Breast epithelium (tissue), 4 donors: ENCODE measurements at regions of chr1 and their contacts with region 1.

Region 1: DNA sequence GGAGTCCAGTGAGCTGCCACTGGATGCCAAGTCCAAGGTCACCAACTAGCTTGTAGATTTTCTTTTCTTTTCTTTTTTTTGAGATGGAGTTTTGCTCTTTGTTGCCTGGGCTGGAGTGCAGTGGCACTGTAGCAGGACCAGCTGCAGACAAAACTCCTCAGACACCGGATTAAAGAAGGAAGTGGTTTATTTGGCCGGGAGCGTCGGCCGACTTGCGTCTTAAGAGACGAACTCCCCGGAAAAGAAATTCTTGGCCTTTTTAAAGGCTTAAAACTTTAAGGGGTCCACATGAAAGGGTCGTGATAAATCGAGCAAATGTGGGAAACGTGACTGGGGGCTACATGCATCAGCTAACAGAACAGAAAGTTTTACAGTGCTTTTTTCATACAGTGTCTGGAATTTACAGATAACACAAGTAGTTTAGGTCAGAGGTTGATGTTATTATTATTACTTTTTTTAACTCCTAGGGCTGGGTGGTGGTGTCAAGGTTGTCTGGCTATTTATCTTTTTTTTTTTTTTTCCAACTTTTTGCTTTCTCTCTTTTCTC is 36.4 kb upstream of the CFAP126 start:
- DNase-seq: no peak
- H3K4me3 ChIP-seq: no peak overlapping the region
- H3K27ac ChIP-seq: no peak overlapping the region
- H3K4me1 ChIP-seq: no peaks in the 10 kb centered on the region
- H3K27me3 ChIP-seq: no peaks in the 10 kb centered on the region
- CTCF ChIP-seq: no peak
- POLR2A ChIP-seq: no peak

Region 2: DNA sequence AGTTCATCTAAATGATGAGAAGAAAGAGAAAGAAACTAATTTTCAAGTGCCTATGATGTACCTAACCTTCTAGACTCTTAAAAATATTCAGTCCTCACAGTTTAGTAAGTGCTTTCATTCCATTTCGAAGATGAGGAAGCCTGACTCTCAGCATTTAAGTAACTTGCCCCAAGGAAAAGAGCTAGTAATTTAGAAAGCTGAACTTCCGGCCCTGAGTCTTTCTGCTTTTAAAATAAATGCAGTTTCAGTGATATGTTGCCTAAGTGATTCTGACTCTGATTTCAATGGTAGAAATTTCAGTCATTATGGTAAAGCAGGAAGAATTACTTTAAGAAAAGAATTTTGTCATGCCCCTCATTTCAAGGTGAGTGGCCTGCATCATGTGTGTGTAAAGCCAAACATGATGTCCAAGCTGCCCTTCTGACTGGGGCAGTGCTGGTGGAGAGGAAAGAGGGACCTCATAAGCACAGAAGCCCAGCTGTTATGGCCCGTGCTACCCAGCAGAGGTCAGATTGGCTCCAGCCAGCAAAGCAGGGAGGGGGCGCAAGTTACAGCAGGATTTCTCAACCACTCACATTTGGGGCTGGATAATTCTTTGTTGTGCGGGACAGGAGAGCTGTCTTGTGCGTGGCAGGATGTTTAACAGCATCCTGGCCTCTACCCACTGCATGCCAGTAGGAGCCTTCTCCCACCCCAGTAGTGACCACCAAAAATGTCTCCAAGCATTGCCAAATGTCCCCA is 1242.0 kb before region 1 on chr1:
- intact Hi-C with region 1: no loop called
- DNase-seq: no peak
- H3K4me3 ChIP-seq: no peak overlapping the region
- H3K27ac ChIP-seq: no peak overlapping the region
- H3K4me1 ChIP-seq: no peaks in the 10 kb centered on the region
- H3K27me3 ChIP-seq: no peaks in the 10 kb centered on the region
- CTCF ChIP-seq: no peak
- POLR2A ChIP-seq: no peak

Region 3: DNA sequence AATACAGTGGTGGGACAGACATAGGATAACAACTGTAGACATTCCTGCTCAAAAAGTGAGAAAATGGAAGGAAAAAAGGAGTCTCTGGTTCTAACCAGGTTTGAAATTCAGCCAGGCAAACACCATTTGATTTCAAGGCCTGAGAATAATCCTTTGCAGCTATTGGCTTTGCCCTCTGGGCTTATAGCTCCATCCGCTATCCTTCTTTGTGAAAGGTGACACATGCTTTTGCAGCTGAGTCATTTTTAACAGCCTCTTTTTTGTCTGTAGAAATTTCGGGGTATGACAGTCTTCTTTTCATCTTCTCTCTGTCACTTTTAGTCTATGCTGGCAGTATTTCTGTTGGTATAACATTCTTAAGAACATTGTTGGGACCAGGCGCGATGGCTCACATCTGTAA is 73.8 kb before region 1 on chr1:
- intact Hi-C with region 1: no loop called
- DNase-seq: no peak
- H3K4me3 ChIP-seq: no peak overlapping the region
- H3K27ac ChIP-seq: no peak overlapping the region
- H3K4me1 ChIP-seq: no peaks in the 10 kb centered on the region
- H3K27me3 ChIP-seq: no peaks in the 10 kb centered on the region
- CTCF ChIP-seq: no peak
- POLR2A ChIP-seq: no peak

Region 4: DNA sequence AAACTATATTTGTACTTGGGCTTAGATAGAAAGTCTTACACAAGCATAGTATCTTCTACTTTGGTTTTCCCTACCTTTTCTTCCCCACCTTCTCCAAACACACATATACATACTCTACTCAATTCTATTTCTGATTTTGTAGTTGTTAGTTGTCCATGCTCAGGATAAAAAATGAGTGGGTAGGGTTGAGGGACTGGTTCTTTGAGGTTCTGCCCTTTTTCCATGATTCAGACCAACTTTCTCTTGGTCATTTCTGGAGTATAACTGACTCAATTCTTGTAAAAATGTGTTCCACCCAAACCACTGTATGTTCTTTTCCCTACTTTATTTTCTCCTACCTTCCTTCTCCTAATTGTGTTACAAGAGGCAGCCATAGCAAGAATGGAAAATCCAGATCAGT is 39.8 kb before region 1 on chr1:
- intact Hi-C with region 1: loop called (anchors 2 kb)
- DNase-seq: no peak
- H3K4me3 ChIP-seq: no peak overlapping the region
- H3K27ac ChIP-seq: no peak overlapping the region
- H3K4me1 ChIP-seq: no peaks in the 10 kb centered on the region
- H3K27me3 ChIP-seq: no peaks in the 10 kb centered on the region
- CTCF ChIP-seq: no peak
- POLR2A ChIP-seq: no peak